Activated B cell treated with CpG ODN at 0.5 μM for 24 hours (primary cell): ENCODE measurements at regions of chr5 and their contacts with region 1.

Region 1: DNA sequence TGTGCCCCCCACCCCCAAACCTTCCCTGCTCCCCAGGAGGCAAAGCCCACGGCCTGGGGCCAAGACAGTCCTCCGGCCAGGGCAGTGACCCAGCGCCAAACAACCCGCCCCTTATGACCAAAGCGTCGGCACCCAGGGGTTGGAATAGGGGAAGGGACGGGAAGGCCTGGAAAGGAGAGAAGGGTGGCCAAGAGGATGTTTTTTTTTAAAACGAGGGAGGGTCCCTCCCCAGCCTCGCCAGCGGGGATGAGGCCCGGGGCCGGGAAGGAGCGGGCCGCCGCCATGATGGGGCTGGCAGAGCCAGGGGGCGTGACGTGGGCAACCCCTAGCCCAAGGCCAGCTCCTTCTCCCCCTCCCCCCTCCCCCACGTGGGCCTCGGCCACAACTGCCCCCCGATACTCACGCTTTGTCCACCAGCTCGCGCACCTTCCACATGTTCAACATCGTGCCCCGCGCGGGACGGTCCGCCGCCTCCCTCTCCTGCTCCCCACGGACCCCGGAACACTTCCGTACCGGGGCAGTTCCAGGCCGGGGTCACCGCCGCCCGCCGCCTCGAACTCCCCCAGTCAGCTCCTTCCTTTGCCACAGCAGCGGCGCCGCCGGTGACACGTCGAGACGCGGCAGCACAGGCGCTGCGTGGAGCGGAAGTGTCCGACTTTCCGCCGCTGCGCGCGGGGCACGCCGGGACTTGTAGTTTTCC is at the start of gene CLINT1:
- DNase-seq: peak; percentile 82
- ATAC-seq: peak; percentile 82
- H3K4me3 Mint-ChIP-seq: peak within 1 kb of the TSS; percentile 97
- H3K27ac Mint-ChIP-seq: peak within 1 kb of the TSS; percentile 93
- H3K4me1 Mint-ChIP-seq: peaks cover 76% of the 10 kb centered on the region
- H3K27me3 Mint-ChIP-seq: no peaks in the 10 kb centered on the region
- CTCF ChIP-seq: no peak
- total RNA-seq, gene CLINT1: 92.4 and 105 TPM in 2 replicates

Region 2: DNA sequence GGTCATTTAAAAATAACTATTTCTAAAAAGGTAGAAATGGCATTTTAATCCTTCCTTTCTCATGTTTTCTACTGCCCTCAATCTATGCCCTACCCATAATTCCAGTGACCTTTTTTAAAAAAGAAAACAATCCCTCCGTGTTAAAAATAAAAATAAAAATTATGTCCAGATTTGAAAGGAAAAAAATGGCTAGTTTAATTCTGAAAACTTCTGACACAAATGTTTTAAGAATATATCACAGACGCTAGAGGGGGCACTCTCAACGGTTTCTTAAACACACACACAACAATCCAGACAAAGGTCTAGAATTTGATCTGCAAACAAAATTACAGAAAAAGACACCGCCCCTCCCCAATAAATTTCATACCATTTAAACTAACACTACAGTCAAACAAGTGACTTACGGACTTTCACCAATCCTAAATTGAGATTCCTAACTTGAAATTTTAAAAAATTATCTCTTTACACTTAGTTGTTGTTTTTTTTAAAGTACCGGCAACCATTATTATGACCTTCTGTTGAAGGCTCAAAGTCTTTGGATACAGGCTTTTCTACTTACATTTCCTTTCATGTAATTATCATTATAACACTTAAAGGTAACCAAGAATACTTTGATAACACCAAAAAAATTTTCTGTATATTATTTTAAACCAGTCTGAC is 38.0 kb before region 1 on chr5:
- CTCF ChIA-PET with region 1: interaction called, 5 read pairs
- POLR2A ChIA-PET with region 1: no interaction called
- intact Hi-C with region 1: loop called (anchors 5 kb)
- DNase-seq: no peak
- ATAC-seq: no peak
- H3K4me3 Mint-ChIP-seq: no peak overlapping the region
- H3K27ac Mint-ChIP-seq: peak overlapping the region; percentile 12
- H3K4me1 Mint-ChIP-seq: peaks cover 25% of the 10 kb centered on the region
- H3K27me3 Mint-ChIP-seq: no peaks in the 10 kb centered on the region
- CTCF ChIP-seq: no peak

Region 3: DNA sequence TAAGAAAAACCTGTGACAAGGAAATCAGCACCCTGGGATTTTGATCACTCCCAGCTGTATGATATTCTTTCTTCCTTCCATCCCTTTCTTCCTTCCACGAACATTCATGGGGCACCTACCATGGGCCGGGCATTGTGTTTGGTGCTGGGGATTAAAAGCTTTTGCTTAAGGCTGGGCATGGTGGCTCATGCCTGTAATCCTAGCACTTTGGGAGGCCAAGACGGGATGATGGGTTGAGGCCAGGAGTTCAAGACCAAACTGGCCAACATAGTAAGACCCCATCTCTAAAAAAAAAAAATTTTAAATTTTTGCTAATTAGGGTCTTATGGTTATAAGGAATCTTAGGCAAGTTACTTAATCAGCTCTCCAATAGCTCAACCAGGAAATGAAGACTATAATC is 48.8 kb after region 1 on chr5:
- CTCF ChIA-PET with region 1: no interaction called
- POLR2A ChIA-PET with region 1: interaction called, 15 read pairs
- intact Hi-C with region 1: no loop called
- DNase-seq: no peak
- ATAC-seq: no peak
- H3K4me3 Mint-ChIP-seq: no peak overlapping the region
- H3K27ac Mint-ChIP-seq: no peak overlapping the region
- H3K4me1 Mint-ChIP-seq: peaks cover 15% of the 10 kb centered on the region
- H3K27me3 Mint-ChIP-seq: no peaks in the 10 kb centered on the region
- CTCF ChIP-seq: no peak

Region 4: GRCh38 chr5:157917899-157918809 is 59.5 kb after region 1 on chr5:
- CTCF ChIA-PET with region 1: interaction called, 5 read pairs
- POLR2A ChIA-PET with region 1: interaction called, 9 read pairs
- intact Hi-C with region 1: loop called (anchors 1 kb)
- DNase-seq: no peak
- ATAC-seq: no peak
- H3K4me3 Mint-ChIP-seq: no peak overlapping the region
- H3K27ac Mint-ChIP-seq: peak overlapping the region; percentile 89
- H3K4me1 Mint-ChIP-seq: peaks cover 34% of the 10 kb centered on the region
- H3K27me3 Mint-ChIP-seq: no peaks in the 10 kb centered on the region
- CTCF ChIP-seq: no peak

Region 5: DNA sequence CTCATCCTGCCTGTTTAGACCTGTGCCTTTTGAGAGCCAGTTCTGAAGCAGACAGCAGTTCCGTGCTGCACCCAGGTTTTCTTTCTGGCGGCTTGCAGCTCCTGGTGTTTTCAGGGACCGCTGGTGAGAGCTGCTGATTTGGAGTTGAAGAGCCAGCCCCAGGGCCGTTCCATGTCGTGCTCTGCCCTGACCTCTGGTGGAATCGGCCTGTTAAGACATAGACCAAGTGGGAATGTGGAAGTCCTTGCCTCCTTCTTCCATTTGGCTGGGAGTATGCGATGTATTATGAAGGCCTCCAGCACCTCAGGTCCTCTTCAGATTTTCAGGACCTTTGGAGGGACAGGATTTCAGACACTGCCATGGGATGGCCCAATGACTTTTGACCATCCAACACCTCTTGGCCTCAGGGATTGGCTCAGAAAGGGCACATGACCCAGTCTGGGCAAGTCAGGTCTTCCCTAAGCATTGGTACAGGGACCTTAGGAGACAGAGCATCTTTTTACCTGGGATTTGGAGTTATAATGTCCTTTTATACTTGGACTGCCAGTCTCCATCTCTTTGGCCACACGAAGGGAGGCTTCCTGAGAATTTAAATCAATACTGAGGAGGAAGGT is 136.3 kb after region 1 on chr5:
- CTCF ChIA-PET with region 1: interaction called, 15 read pairs
- POLR2A ChIA-PET with region 1: interaction called, 5 read pairs
- intact Hi-C with region 1: loop called (anchors 1 kb)
- DNase-seq: peak; percentile 21
- ATAC-seq: peak; percentile 84
- H3K4me3 Mint-ChIP-seq: no peak overlapping the region
- H3K27ac Mint-ChIP-seq: no peak overlapping the region
- H3K4me1 Mint-ChIP-seq: no peaks in the 10 kb centered on the region
- H3K27me3 Mint-ChIP-seq: peaks cover 2% of the 10 kb centered on the region
- CTCF ChIP-seq: no peak